AG04450 (cell line): ENCODE measurements at regions of chr6 and their contacts with region 1.

Region 1: DNA sequence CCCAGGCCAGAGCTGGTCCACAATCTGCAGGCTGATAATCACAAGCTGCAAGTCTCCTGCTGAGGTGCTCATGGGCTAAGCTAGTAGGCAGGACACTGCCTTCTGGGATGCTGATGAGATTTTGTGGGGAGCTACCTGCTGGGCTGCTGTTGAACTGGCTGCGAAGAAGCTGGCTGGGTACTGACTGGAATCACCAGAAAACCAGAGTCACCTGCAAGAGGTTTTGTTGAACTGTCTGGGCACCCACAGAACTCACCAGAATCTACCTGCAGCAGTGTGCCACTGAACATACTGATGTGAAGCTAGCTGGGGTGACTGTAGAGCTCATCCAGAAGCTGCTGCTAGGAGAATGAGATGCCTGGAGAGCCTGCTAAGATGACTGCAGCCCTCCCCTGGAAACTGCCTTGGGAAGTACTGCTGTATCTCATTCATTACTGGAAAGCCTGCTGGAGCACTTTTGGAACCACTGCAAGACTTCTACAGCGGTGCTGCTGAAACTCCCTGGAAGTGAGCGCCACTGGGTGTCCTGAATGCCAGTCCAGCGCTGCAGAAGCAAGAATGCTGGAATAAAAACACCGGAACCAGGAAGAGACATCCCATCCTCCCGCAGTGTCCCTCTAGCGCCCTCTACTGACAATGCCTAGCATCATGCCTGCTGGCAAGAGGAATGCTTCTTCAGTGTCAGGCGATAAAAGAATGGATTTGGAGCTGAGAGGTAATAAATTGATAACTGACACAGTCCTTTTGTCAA is 64.9 kb upstream of the ARHGAP18 start:
- DNase-seq: peak; percentile 52
- H3K4me3 ChIP-seq: no peak overlapping the region; the same call in 1 of the 2 replicates
- H3K27ac ChIP-seq: no peak overlapping the region
- H3K27me3 ChIP-seq: no peaks in the 10 kb centered on the region
- CTCF ChIP-seq: peak; percentile 99

Region 2: DNA sequence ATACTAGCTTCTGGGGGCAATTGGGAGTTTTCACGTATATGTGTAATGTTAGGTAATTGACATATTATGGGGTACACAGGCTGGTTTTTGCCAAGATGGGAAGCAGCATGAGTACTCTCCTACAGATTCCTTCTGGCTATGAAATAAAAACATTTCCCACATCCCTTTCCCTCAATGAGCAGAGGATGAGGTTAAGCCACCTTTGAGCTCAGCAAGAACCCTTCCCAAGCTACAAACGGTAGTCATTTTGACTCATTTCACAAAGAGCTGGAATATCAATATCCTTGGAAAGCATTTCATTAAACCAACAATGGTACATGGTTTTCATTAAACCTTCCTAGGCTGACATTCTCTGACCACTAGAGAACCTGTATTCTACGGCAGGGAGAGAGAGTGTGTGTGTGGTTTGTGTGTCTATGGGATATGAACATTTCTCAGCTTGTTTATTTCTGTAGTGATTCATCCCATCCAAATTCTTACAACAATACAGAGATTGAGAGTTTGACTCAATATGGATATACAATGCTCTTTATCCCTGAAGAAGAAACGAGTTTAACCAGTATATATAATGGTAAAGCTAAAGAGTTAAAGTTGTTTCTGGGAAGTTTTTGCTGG is 184.4 kb before region 1 on chr6:
- CTCF ChIA-PET with region 1: interaction called, 10 read pairs
- POLR2A ChIA-PET with region 1: no interaction called
- DNase-seq: peak; percentile 90
- H3K4me3 ChIP-seq: no peak overlapping the region
- H3K27ac ChIP-seq: no peak overlapping the region
- H3K27me3 ChIP-seq: no peaks in the 10 kb centered on the region
- CTCF ChIP-seq: no peak; the same call in 1 of the 2 replicates

Region 3: GRCh38 chr6:129691709-129692108 is 83.2 kb before region 1 on chr6:
- CTCF ChIA-PET with region 1: no interaction called
- POLR2A ChIA-PET with region 1: no interaction called
- DNase-seq: no peak
- H3K4me3 ChIP-seq: no peak overlapping the region
- H3K27ac ChIP-seq: no peak overlapping the region
- H3K27me3 ChIP-seq: no peaks in the 10 kb centered on the region
- CTCF ChIP-seq: no peak

Region 4: GRCh38 chr6:129759796-129760605 is 14.9 kb before region 1 on chr6:
- CTCF ChIA-PET with region 1: interaction called, 36 read pairs
- POLR2A ChIA-PET with region 1: no interaction called
- DNase-seq: no peak
- H3K4me3 ChIP-seq: no peak overlapping the region
- H3K27ac ChIP-seq: no peak overlapping the region
- H3K27me3 ChIP-seq: no peaks in the 10 kb centered on the region
- CTCF ChIP-seq: no peak

Region 5: GRCh38 chr6:129795261-129795660 is 20.4 kb after region 1 on chr6:
- CTCF ChIA-PET with region 1: interaction called, 39 read pairs
- POLR2A ChIA-PET with region 1: no interaction called
- DNase-seq: no peak
- H3K4me3 ChIP-seq: no peak overlapping the region
- H3K27ac ChIP-seq: no peak overlapping the region
- H3K27me3 ChIP-seq: no peaks in the 10 kb centered on the region
- CTCF ChIP-seq: no peak